CD8-positive, alpha-beta memory T cell (primary cell): ENCODE measurements at regions of chr7 and their contacts with region 1.

Region 1: DNA sequence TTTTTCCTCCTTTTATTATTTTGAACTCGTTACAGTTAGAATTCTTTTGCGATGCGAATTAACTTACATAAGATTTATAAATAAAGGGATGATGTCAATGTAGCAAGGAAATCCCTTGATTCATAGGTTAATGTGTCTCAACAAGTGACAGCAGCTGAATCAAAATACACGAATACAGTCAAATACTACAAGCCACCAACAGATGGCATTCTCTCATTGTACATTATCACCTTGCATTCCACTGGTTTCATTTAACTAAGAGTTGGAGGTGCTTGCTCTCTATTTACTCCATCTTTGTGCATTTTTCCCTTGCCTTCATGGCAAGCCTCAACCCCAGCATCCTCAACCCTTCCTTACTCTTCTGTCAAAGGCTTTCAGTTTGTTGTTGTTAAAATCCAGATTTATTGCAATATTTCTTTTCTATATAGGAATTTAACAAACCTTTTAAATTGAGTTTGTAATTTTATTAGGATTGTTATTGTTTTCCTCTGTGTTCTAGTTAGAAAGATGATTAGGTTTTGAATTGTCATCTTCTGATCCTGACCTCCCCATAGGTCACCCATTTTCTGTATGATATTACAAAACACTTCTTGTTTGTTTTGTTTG is 78.3 kb downstream of the SLC25A40 start:
- DNase-seq: peak in 2 of 5 donors; percentile 30 to 31
- H3K4me3 ChIP-seq: no peak overlapping the region
- H3K4me3 Mint-ChIP-seq: no peak overlapping the region
- H3K27ac ChIP-seq: no peak overlapping the region
- H3K27ac Mint-ChIP-seq: no peak overlapping the region
- H3K4me1 ChIP-seq: no peaks in the 10 kb centered on the region
- H3K4me1 Mint-ChIP-seq: no peaks in the 10 kb centered on the region
- H3K27me3 ChIP-seq: no peaks in the 10 kb centered on the region
- H3K27me3 Mint-ChIP-seq: peaks cover 5 to 13% of the 10 kb centered on the region in 2 donors

Region 2: GRCh38 chr7:87816389-87816788 is 18.5 kb after region 1 on chr7:
- CTCF ChIA-PET with region 1: no interaction called
- POLR2A ChIA-PET with region 1: no interaction called
- DNase-seq: no peak
- H3K4me3 ChIP-seq: no peak overlapping the region
- H3K4me3 Mint-ChIP-seq: no peak overlapping the region
- H3K27ac ChIP-seq: no peak overlapping the region
- H3K27ac Mint-ChIP-seq: no peak overlapping the region
- H3K4me1 ChIP-seq: no peaks in the 10 kb centered on the region
- H3K4me1 Mint-ChIP-seq: peaks cover 0 to 6% (median 2%) of the 10 kb centered on the region in 3 donors
- H3K27me3 ChIP-seq: no peaks in the 10 kb centered on the region
- H3K27me3 Mint-ChIP-seq: peaks cover 6 to 7% of the 10 kb centered on the region in 2 donors

Region 3: DNA sequence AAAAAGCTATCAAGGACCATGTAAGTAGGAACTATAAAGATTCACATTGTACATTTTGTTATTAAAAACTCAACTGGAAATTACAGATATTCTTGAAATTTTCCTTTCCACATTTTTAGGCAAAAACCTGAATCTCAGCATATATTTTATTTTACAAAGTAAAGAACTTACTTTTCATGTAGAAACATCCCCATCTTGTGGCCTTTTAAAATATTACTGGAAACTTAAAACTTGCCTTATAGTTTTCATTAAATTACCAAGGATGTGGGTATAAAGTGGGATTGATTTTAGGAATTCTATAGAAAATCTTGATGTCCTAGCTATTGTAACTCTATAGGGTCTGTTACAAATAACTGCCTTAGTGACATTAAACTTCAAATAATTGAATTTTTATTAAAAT is 89.0 kb after region 1 on chr7:
- CTCF ChIA-PET with region 1: interaction called, 18 read pairs
- POLR2A ChIA-PET with region 1: no interaction called
- DNase-seq: peak in 2 of 5 donors; percentile 39 to 43
- H3K4me3 ChIP-seq: no peak overlapping the region
- H3K4me3 Mint-ChIP-seq: no peak overlapping the region
- H3K27ac ChIP-seq: no peak overlapping the region
- H3K27ac Mint-ChIP-seq: no peak overlapping the region
- H3K4me1 ChIP-seq: no peaks in the 10 kb centered on the region
- H3K4me1 Mint-ChIP-seq: peaks cover 5 to 30% (median 24%) of the 10 kb centered on the region in 3 donors
- H3K27me3 ChIP-seq: no peaks in the 10 kb centered on the region
- H3K27me3 Mint-ChIP-seq: no peaks in the 10 kb centered on the region